ENCODE measurements at regions of chr13 and their contacts with region 1.

Region 1: DNA sequence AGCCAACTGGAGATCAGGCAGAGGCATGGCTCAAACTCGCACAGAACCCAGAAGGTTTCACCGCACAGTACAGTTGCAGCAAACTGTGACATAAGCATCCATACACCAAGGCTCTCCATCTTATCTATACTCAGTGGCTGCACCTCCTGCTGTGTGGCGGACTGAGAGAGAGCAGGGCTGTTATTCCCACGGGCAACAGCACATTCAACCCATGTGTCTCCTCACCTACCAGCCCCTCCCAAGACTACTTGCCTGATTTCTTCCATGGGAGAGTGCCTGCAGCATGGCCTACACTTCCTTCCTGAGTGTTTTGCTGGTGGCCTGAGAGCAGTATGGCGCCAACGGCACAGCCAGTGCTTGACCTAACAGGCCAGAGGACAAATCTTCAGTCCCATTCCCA is 1606.6 kb downstream of the SLITRK1 start:
- DNase-seq: no peak
- ATAC-seq: no peak
- H3K4me3 ChIP-seq: no peak overlapping the region
- H3K27ac ChIP-seq: no peak overlapping the region
- H3K4me1 ChIP-seq: no peaks in the 10 kb centered on the region
- H3K27me3 ChIP-seq: no peaks in the 10 kb centered on the region
- CTCF ChIP-seq: no peak

Region 2: DNA sequence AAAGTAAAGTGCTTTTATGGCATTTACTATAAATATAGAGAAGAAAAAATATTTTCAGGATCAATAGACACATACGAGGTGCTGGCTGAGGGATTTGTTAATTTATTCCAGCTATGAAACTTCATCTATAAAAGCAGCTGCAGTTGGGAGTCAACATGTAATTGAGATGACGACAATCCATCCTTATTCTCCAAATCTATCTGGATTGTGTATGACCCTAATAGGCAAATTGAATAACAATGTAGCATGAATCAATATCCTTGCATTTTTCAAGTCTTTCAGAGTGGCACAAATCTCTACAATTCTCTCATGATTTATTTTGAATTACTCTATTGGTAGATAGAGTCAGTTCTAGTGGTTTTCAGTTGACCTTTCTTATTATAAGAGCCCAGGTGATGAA is 638.2 kb before region 1 on chr13:
- intact Hi-C with region 1: no loop called
- DNase-seq: no peak
- ATAC-seq: no peak
- H3K4me3 ChIP-seq: no peak overlapping the region
- H3K27ac ChIP-seq: no peak overlapping the region
- H3K4me1 ChIP-seq: no peaks in the 10 kb centered on the region
- H3K27me3 ChIP-seq: no peaks in the 10 kb centered on the region
- CTCF ChIP-seq: no peak

Region 3: GRCh38 chr13:82206241-82206640 is 69.4 kb before region 1 on chr13:
- intact Hi-C with region 1: loop called in 1 of 2 experiments (anchors 1 kb)
- DNase-seq: no peak
- ATAC-seq: no peak
- H3K4me3 ChIP-seq: no peak overlapping the region
- H3K27ac ChIP-seq: no peak overlapping the region
- H3K4me1 ChIP-seq: no peaks in the 10 kb centered on the region
- H3K27me3 ChIP-seq: no peaks in the 10 kb centered on the region
- CTCF ChIP-seq: no peak

Region 4: DNA sequence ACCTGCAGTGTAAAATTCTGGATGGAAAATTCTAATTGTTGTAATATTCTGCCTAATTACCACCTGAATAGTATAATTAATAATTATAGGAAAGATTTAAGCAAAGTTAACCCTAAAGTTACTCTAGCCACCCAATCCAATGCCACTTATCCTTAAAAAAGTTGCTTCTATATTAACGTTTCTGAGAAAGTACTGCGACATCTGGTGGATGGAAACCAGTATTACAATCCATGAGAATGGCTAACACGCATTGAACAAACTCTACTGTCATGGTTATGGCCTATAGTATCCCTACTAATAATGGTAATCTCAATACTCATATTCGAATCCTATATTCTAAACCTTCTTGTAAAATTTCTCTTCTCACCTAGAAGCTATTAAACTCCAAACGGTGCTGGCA is 54.9 kb after region 1 on chr13:
- intact Hi-C with region 1: no loop called
- DNase-seq: no peak
- ATAC-seq: no peak
- H3K4me3 ChIP-seq: no peak overlapping the region
- H3K27ac ChIP-seq: no peak overlapping the region
- H3K4me1 ChIP-seq: no peaks in the 10 kb centered on the region
- H3K27me3 ChIP-seq: no peaks in the 10 kb centered on the region
- CTCF ChIP-seq: no peak

Measured in psoas muscle (tissue), 8 donors.